Naive thymus-derived CD8-positive, alpha-beta T cell (primary cell): ENCODE measurements at regions of chr14 and their contacts with region 1.

Region 1: DNA sequence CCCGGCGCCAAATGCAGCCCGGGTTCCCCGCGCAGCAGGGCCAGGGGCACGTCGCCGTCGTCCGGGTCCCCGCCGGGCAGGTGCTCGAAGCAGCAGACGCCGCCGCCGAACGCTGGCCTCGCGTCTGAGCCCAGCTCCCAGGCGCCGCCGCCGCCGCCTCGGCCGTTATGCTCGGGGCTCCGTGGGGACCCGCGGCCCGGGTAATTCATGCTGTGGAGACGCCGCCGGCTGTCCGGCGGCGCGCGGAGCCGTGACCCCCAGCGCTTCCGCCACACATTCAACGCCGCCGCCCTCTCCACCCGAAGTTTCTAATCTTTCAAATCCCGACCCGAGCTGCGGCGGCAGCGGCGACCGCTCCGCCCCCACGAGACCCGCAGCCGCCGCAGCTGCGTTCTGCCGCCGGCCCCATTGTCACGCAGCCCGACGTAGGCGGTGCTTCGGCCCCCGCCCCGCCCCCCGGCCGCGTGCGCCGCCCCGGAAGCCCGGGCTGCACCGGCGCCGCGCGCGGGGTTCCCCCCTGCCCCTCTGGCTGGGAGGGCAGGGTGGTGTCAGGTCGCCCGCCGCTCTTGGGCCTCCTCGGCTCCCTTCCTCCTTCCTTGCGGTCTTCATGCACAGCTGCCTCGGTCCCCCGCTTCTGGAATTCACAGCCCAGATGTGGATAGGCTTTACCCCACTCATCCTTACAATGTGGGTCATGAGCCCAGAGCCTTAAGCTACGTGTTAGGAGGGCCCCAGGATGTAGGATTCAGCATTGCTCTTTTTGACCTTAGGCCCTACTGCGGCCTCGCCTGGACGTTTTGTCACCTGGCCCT is at the start of gene DDHD1:
- DNase-seq: peak; percentile 75 to 89 (median 84)
- ATAC-seq: peak; percentile 79 to 85
- H3K4me3 Mint-ChIP-seq: peak within 1 kb of the TSS; percentile 93 to 100 (median 98)
- H3K27ac Mint-ChIP-seq: peak within 1 kb of the TSS; percentile 97 to 99 (median 98)
- H3K4me1 Mint-ChIP-seq: peaks cover 30 to 51% (median 48%) of the 10 kb centered on the region in 4 donors
- H3K27me3 Mint-ChIP-seq: peaks cover 0 to 2% (median 0%) of the 10 kb centered on the region in 5 donors
- polyA plus RNA-seq, gene DDHD1: 4.3 to 6.4 (median 5.7) TPM

Region 2: GRCh38 chr14:53109105-53110041 is 43.7 kb before region 1 on chr14:
- POLR2A ChIA-PET with region 1: interaction called, 56 read pairs
- DNase-seq: peak in 8 of 10 donors; percentile 9 to 61 (median 44)
- ATAC-seq: peak; percentile 71 to 73
- H3K4me3 Mint-ChIP-seq: no peak overlapping the region
- H3K27ac Mint-ChIP-seq: no peak overlapping the region
- H3K4me1 Mint-ChIP-seq: peaks cover 0 to 36% (median 13%) of the 10 kb centered on the region in 4 donors
- H3K27me3 Mint-ChIP-seq: no peaks in the 10 kb centered on the region

Region 3: GRCh38 chr14:53174918-53175317 is 21.8 kb after region 1 on chr14:
- POLR2A ChIA-PET with region 1: no interaction called
- DNase-seq: no peak
- ATAC-seq: no peak
- H3K4me3 Mint-ChIP-seq: no peak overlapping the region
- H3K27ac Mint-ChIP-seq: peak overlapping the region in 1 of 10 donors; percentile 7
- H3K4me1 Mint-ChIP-seq: peaks cover 0 to 6% (median 0%) of the 10 kb centered on the region in 4 donors
- H3K27me3 Mint-ChIP-seq: no peaks in the 10 kb centered on the region

Region 4: DNA sequence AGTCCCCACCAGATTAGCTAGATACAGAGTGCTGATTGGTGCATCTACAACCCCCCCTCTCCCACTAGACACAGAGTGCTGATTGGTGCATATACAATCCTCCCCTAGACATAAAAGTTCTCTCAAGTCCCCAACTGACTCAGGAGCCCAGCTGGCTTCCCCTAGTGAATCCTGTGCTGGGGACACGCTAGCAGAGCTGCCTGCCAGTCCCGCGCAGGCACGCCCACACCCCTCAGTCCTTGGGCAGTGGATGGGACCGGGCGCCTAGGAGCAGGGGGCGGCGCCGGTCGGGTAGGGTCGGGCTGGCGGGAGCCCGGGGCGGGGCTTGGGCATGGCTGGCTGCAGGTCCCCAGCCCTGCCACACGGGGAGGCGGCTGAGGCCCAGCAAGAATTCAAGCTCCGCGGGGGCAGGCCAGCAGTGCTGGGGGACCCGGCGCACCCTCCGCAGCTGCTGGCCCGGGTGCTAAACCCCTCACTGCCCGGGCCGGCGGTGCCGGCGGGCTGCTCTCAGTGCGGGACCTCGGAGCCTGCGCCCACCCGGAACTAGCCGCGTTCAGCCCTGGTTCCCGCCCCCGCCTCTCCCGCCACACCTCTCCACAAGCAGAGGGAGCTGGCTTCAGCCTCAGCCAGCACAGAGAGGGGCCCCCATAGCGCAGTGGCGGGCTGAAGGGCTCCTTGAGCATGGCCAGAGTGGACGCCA is 64.3 kb after region 1 on chr14:
- POLR2A ChIA-PET with region 1: interaction called, 21 read pairs
- DNase-seq: peak; percentile 55 to 79 (median 68)
- ATAC-seq: peak; percentile 94 to 96
- H3K4me3 Mint-ChIP-seq: peak overlapping the region; percentile 83 to 95 (median 90)
- H3K27ac Mint-ChIP-seq: peak overlapping the region in 9 of 10 donors; percentile 29 to 89 (median 84)
- H3K4me1 Mint-ChIP-seq: peaks cover 5 to 10% (median 7%) of the 10 kb centered on the region in 4 donors
- H3K27me3 Mint-ChIP-seq: no peaks in the 10 kb centered on the region